CD8-positive, alpha-beta T cell (primary cell): ENCODE measurements at regions of chr12 and their contacts with region 1.

Region 1: DNA sequence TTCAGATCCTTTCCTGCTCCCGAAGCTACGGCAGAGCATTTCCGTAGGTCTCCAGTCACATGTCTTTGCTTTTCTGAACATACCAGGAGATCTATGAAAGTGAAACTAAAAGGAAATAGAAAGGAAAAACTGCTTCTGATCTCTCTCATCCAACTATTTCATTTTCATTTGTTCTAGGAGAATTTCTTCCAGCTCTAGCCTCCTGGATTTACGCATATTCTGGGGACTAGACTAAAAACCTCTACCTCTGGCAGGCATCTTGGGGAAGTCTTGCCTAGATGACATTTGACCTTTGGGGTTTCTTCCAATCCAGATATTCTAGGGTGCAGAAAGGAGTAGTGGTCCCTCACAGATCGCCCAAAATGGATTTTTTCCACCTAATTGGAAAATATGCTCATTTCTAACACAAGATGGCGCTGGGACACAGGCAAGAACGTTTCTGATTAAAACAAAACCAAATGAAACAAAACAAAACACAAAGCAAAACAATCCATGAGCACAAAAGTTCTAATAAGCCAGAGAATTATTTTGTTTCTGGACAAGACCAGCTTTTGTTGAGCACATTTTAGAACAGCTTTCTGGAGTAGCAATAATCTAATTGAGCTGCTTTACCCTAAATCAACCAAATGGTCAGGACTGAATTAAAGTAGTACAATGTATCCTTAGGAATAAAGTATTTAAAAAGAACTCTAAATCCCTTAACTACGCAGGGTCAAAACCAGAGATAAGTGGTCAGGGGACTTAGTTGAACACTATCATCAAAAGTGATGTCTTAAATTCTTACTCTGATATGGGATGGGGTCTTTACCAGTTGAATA is 12.3 kb upstream of the PARP11 start:
- DNase-seq: peak in 8 of 9 experiments; percentile 28 to 76 (median 43)
- ATAC-seq: peak; percentile 62
- H3K4me3 ChIP-seq: no peak overlapping the region
- H3K4me3 Mint-ChIP-seq: no peak overlapping the region
- H3K27ac ChIP-seq: no peak overlapping the region
- H3K27ac Mint-ChIP-seq: peak overlapping the region; percentile 83
- H3K4me1 ChIP-seq: no peaks in the 10 kb centered on the region
- H3K4me1 Mint-ChIP-seq: peaks cover 9% of the 10 kb centered on the region
- H3K27me3 ChIP-seq: no peaks in the 10 kb centered on the region
- H3K27me3 Mint-ChIP-seq: no peaks in the 10 kb centered on the region
- CTCF ChIP-seq: peak; percentile 93

Region 2: GRCh38 chr12:3872800-3873636 is 12.5 kb before region 1 on chr12 and contains the start of gene PARP11:
- CTCF ChIA-PET with region 1: interaction called, 23 read pairs
- POLR2A ChIA-PET with region 1: interaction called, 3 read pairs
- intact Hi-C with region 1: no loop called
- DNase-seq: peak; percentile 95 to 99 (median 98)
- ATAC-seq: peak; percentile 96
- H3K4me3 ChIP-seq: peak within 1 kb of the TSS; percentile 64 to 80
- H3K4me3 Mint-ChIP-seq: peak within 1 kb of the TSS; percentile 97
- H3K27ac ChIP-seq: peak within 1 kb of the TSS; percentile 88 to 97
- H3K27ac Mint-ChIP-seq: peak within 1 kb of the TSS; percentile 99
- H3K4me1 ChIP-seq: peaks cover 45% of the 10 kb centered on the region
- H3K4me1 Mint-ChIP-seq: peaks cover 47% of the 10 kb centered on the region
- H3K27me3 ChIP-seq: no peaks in the 10 kb centered on the region
- H3K27me3 Mint-ChIP-seq: no peaks in the 10 kb centered on the region
- CTCF ChIP-seq: no peak
- total RNA-seq, gene PARP11: 11.5 to 11.8 TPM

Region 3: GRCh38 chr12:3928540-3929184 is 43.2 kb after region 1 on chr12:
- CTCF ChIA-PET with region 1: interaction called, 22 read pairs
- POLR2A ChIA-PET with region 1: interaction called, 3 read pairs
- intact Hi-C with region 1: no loop called
- DNase-seq: no peak
- ATAC-seq: no peak
- H3K4me3 ChIP-seq: no peak overlapping the region
- H3K4me3 Mint-ChIP-seq: no peak overlapping the region
- H3K27ac ChIP-seq: no peak overlapping the region
- H3K27ac Mint-ChIP-seq: no peak overlapping the region
- H3K4me1 ChIP-seq: peaks cover 23% of the 10 kb centered on the region
- H3K4me1 Mint-ChIP-seq: peaks cover 53% of the 10 kb centered on the region
- H3K27me3 ChIP-seq: no peaks in the 10 kb centered on the region
- H3K27me3 Mint-ChIP-seq: no peaks in the 10 kb centered on the region
- CTCF ChIP-seq: no peak

Region 4: GRCh38 chr12:3973978-3974644 is 88.6 kb after region 1 on chr12:
- CTCF ChIA-PET with region 1: interaction called, 26 read pairs
- POLR2A ChIA-PET with region 1: no interaction called
- intact Hi-C with region 1: no loop called
- DNase-seq: peak in 1 of 9 experiments; percentile 49
- ATAC-seq: peak; percentile 22
- H3K4me3 ChIP-seq: peak overlapping the region in 1 of 2 experiments; percentile 4
- H3K4me3 Mint-ChIP-seq: peak overlapping the region; percentile 69
- H3K27ac ChIP-seq: peak overlapping the region in 1 of 2 experiments; percentile 44
- H3K27ac Mint-ChIP-seq: peak overlapping the region; percentile 81
- H3K4me1 ChIP-seq: peaks cover 66% of the 10 kb centered on the region
- H3K4me1 Mint-ChIP-seq: peaks cover 77% of the 10 kb centered on the region
- H3K27me3 ChIP-seq: no peaks in the 10 kb centered on the region
- H3K27me3 Mint-ChIP-seq: no peaks in the 10 kb centered on the region
- CTCF ChIP-seq: no peak

Region 5: GRCh38 chr12:3998968-3999826 is 113.7 kb after region 1 on chr12:
- CTCF ChIA-PET with region 1: interaction called, 226 read pairs
- POLR2A ChIA-PET with region 1: interaction called, 3 read pairs
- intact Hi-C with region 1: loop called in 1 of 2 experiments (anchors 1 kb)
- DNase-seq: peak in 3 of 9 experiments; percentile 32 to 56 (median 33)
- ATAC-seq: peak; percentile 69
- H3K4me3 ChIP-seq: no peak overlapping the region
- H3K4me3 Mint-ChIP-seq: no peak overlapping the region
- H3K27ac ChIP-seq: no peak overlapping the region
- H3K27ac Mint-ChIP-seq: no peak overlapping the region
- H3K4me1 ChIP-seq: peaks cover 15% of the 10 kb centered on the region
- H3K4me1 Mint-ChIP-seq: peaks cover 24% of the 10 kb centered on the region
- H3K27me3 ChIP-seq: no peaks in the 10 kb centered on the region
- H3K27me3 Mint-ChIP-seq: no peaks in the 10 kb centered on the region
- CTCF ChIP-seq: no peak

Region 6: DNA sequence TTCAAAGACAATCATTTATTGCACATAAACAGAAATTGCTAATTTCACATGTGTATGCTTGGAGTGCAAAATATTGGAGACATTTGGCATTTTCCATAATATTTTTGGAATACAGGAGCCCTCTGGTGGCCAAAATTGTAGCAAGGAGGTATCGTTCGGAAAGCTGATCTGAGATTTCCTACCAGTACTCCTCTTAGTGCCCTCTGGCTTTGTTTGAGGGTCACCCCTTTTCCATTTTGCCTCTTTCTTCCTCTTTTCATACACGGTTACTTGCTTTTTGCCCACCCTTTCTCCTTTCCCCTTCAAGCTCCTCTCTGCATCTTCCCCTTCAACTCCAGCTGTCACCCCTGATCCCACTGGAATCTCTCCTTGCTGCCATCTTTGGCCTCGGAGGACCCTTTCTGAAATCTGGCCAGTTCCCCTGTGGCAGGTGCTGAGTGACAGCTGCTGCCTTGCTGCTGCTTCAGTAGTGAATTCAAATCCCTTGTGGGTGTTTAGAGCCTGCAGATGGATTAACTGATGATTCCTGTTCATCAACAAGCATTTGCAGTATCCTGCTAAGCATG is 152.3 kb after region 1 on chr12:
- CTCF ChIA-PET with region 1: interaction called, 212 read pairs
- POLR2A ChIA-PET with region 1: interaction called, 7 read pairs
- intact Hi-C with region 1: loop called (anchors 1 kb)
- DNase-seq: peak in 4 of 9 experiments; percentile 18 to 42 (median 24)
- ATAC-seq: no peak
- H3K4me3 ChIP-seq: no peak overlapping the region
- H3K4me3 Mint-ChIP-seq: no peak overlapping the region
- H3K27ac ChIP-seq: no peak overlapping the region
- H3K27ac Mint-ChIP-seq: no peak overlapping the region
- H3K4me1 ChIP-seq: no peaks in the 10 kb centered on the region
- H3K4me1 Mint-ChIP-seq: no peaks in the 10 kb centered on the region
- H3K27me3 ChIP-seq: no peaks in the 10 kb centered on the region
- H3K27me3 Mint-ChIP-seq: no peaks in the 10 kb centered on the region
- CTCF ChIP-seq: peak; percentile 42

Region 7: GRCh38 chr12:4293299-4293965 is 407.9 kb after region 1 on chr12:
- CTCF ChIA-PET with region 1: interaction called, 14 read pairs
- POLR2A ChIA-PET with region 1: interaction called, 3 read pairs
- intact Hi-C with region 1: no loop called
- DNase-seq: peak in 4 of 9 experiments; percentile 33 to 42 (median 37)
- ATAC-seq: peak; percentile 63
- H3K4me3 ChIP-seq: peak overlapping the region in 1 of 2 experiments; percentile 17
- H3K4me3 Mint-ChIP-seq: peak overlapping the region; percentile 74
- H3K27ac ChIP-seq: peak overlapping the region; percentile 37 to 66
- H3K27ac Mint-ChIP-seq: peak overlapping the region; percentile 96
- H3K4me1 ChIP-seq: peaks cover 47% of the 10 kb centered on the region
- H3K4me1 Mint-ChIP-seq: peaks cover 74% of the 10 kb centered on the region
- H3K27me3 ChIP-seq: no peaks in the 10 kb centered on the region
- H3K27me3 Mint-ChIP-seq: no peaks in the 10 kb centered on the region
- CTCF ChIP-seq: no peak